ENCODE measurements at regions of chr10 and their contacts with region 1.

Region 1: DNA sequence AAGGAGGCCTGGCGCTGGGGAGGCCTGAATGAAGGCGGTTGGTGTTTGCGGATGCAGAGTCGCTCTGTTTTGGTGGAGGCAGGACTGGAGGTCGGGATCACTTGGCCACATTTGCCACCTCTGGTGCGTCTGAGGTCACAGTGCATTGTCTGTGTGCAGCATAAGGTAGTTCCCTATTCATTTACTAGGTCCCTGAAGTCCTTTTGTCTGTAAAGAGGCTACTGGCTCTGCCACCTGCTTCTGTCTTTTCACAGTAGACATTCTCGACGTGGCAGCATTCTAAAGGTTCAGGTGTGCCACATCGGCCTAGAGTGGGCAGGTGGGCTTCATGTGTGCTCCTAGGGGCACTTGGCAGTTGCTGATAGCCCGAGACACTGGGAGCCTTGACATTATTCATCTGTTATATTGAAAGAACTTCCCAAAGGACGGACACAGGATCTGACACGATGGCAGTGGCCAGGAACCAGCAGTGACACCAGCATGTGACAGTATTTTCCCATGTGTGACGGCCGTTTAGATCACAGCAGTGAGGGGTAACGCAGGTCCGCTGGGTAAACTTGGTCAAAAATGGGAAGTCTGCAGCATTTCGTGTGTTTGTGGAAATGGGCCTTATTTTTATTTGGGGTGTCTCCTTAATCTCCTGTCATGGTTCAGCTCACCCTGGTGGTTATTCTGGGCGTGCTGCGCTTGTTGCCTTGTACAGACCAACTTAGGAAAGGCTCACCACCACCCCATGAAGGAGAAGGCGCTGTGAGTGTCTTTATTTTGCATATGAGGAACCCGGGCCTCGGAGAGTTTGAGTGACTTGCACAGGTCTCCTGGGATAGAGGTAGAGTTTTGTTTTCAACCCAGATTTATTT is 5.9 kb downstream of the MGMT start:
- DNase-seq: peak; percentile 77
- ATAC-seq: peak; percentile 83
- H3K4me3 ChIP-seq: peak overlapping the region in 2 of 5 experiments; percentile 11 to 38
- H3K4me3 Mint-ChIP-seq: peak overlapping the region; percentile 87
- H3K27ac ChIP-seq: peak overlapping the region; percentile 84 to 90
- H3K27ac Mint-ChIP-seq: peak overlapping the region; percentile 96
- H3K4me1 ChIP-seq: peaks cover 28 to 33% of the 10 kb centered on the region in 2 donors
- H3K4me1 Mint-ChIP-seq: peaks cover 63% of the 10 kb centered on the region
- H3K27me3 ChIP-seq: no peaks in the 10 kb centered on the region
- H3K27me3 Mint-ChIP-seq: no peaks in the 10 kb centered on the region
- CTCF ChIP-seq: no peak

Region 2: GRCh38 chr10:129345763-129346162 is 127.2 kb before region 1 on chr10:
- CTCF ChIA-PET with region 1: no interaction called
- POLR2A ChIA-PET with region 1: no interaction called
- intact Hi-C with region 1: no loop called
- DNase-seq: no peak
- ATAC-seq: no peak
- H3K4me3 ChIP-seq: no peak overlapping the region
- H3K4me3 Mint-ChIP-seq: no peak overlapping the region
- H3K27ac ChIP-seq: no peak overlapping the region
- H3K27ac Mint-ChIP-seq: no peak overlapping the region
- H3K4me1 ChIP-seq: no peaks in the 10 kb centered on the region
- H3K4me1 Mint-ChIP-seq: no peaks in the 10 kb centered on the region
- H3K27me3 ChIP-seq: no peaks in the 10 kb centered on the region
- H3K27me3 Mint-ChIP-seq: peaks cover 8% of the 10 kb centered on the region
- CTCF ChIP-seq: no peak

Region 3: DNA sequence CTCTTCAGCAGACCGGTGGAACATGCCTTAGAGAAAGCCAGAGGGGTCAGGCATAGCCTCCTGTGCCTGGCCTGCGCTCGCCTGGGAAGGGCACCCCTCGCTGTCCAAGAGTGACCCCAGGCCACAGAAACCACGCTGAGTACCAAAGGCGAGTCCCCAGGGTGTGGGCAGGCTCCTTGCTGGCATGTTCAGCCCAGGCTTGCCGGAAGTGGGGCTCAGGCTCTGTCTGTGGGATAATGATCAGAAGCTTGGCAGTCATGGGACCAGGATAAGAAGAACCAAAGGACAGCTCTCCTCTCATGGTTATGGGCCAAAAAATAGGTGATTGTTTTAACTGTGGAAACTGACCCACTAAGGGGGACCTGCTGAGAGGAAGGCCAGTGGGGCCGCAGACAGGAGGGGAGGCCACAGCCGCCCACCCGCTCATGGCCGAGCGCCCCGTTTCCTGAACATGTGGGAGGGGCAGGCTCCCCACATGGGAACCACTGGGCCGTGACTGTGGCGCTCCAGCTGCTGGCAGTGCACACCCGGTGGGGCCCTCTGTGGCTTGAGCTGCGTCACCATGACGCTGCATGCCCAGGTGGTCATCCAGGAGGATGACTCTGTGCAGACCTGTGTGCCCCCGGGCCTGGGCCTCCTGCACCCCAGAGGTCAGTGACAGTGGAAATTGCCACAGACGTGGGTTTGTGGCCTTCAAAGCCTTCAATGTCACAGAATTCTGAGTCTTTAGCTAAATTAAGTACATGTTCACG is 79.0 kb after region 1 on chr10:
- CTCF ChIA-PET with region 1: no interaction called
- POLR2A ChIA-PET with region 1: interaction called, 4 read pairs
- intact Hi-C with region 1: loop called (anchors 1 kb)
- DNase-seq: peak; percentile 38
- ATAC-seq: peak; percentile 85
- H3K4me3 ChIP-seq: no peak overlapping the region
- H3K4me3 Mint-ChIP-seq: peak overlapping the region; percentile 54
- H3K27ac ChIP-seq: no peak overlapping the region
- H3K27ac Mint-ChIP-seq: peak overlapping the region; percentile 83
- H3K4me1 ChIP-seq: peaks cover 6 to 10% of the 10 kb centered on the region in 2 donors
- H3K4me1 Mint-ChIP-seq: peaks cover 29% of the 10 kb centered on the region
- H3K27me3 ChIP-seq: no peaks in the 10 kb centered on the region
- H3K27me3 Mint-ChIP-seq: no peaks in the 10 kb centered on the region
- CTCF ChIP-seq: no peak

Measured in B cell (primary cell).